ENCODE measurements at regions of chr7 and their contacts with region 1.

Region 1: GRCh38 chr7:42319631-42320030 is 82.6 kb upstream of the GLI3 start:
- DNase-seq: peak; percentile 20
- H3K4me3 ChIP-seq: no peak overlapping the region
- H3K27ac ChIP-seq: no peak overlapping the region
- H3K4me1 ChIP-seq: peaks cover 6% of the 10 kb centered on the region
- H3K27me3 ChIP-seq: peaks cover 12 to 41% of the 10 kb centered on the region in 2 experiments
- CTCF ChIP-seq: no peak
- POLR2A ChIP-seq: no peak

Region 2: DNA sequence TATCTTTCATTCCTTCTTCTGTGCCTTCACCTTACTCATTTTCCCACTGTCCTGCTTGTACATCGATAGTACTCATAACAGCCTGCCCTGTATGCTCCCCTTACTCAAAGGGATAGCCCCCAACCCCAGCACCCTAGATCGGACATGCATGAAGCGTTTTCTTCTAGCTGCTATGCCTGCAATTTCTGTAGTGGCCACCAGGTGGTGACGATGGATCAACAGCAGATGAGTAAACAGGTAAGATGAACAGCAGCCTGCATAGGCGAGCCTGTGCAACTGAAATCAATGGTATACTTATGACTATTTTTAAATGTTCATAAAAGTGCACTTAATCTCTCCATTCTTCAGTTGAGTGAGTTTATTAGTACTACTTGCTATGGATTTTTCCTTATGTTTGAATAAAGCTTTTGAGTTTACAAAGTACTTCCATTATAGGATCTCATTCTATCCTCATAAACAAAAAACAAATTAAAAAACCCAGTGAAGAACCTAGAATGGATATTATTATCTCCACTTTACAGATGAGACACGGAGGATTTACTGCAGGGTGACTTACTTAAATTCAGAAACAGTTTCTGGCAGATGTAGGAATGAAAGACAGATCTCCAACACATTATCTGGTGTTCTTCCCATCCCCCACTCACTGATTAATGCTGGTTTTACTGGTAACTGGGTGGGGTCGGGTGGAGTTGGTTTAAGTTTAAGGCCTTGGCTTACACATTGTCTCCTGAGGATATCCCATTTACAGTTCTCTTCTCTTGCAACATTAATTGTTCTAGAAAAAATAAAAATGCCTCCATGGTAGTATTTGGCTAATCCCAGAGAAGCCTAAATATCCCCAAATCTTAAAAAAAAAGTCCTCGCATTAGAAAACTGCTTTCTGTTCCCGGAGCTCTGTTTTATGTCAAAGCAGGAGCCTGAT is 304.7 kb before region 1 on chr7:
- CTCF ChIA-PET with region 1: no interaction called
- POLR2A ChIA-PET with region 1: no interaction called
- dilution Hi-C with region 1: no loop called
- intact Hi-C with region 1: loop called (anchors 10 kb)
- DNase-seq: peak; percentile 42
- H3K4me3 ChIP-seq: no peak overlapping the region
- H3K27ac ChIP-seq: no peak overlapping the region
- H3K4me1 ChIP-seq: no peaks in the 10 kb centered on the region
- H3K27me3 ChIP-seq: no peaks in the 10 kb centered on the region
- CTCF ChIP-seq: peak; percentile 60 to 69
- POLR2A ChIP-seq: no peak